T-cell (primary cell): ENCODE measurements at regions of chr13 and their contacts with region 1.

Region 1: GRCh38 chr13:30442926-30443325 is 20.6 kb downstream of the UBE2L5 start:
- DNase-seq: no peak
- ATAC-seq: no peak
- H3K4me3 ChIP-seq: no peak overlapping the region
- H3K4me3 Mint-ChIP-seq: no peak overlapping the region
- H3K27ac ChIP-seq: no peak overlapping the region
- H3K27ac Mint-ChIP-seq: no peak overlapping the region
- H3K4me1 ChIP-seq: peaks cover 0 to 7% of the 10 kb centered on the region in 2 experiments
- H3K4me1 Mint-ChIP-seq: peaks cover 5 to 24% (median 13%) of the 10 kb centered on the region in 3 donors
- H3K27me3 ChIP-seq: peaks cover 0 to 15% of the 10 kb centered on the region in 2 experiments
- H3K27me3 Mint-ChIP-seq: peaks cover 0 to 5% of the 10 kb centered on the region in 2 donors

Region 2: GRCh38 chr13:30750036-30750435 is 307.1 kb after region 1 on chr13:
- CTCF ChIA-PET with region 1: interaction called in 1 of 2 experiments, 14 read pairs
- POLR2A ChIA-PET with region 1: no interaction called
- DNase-seq: no peak
- ATAC-seq: no peak
- H3K4me3 ChIP-seq: no peak overlapping the region
- H3K4me3 Mint-ChIP-seq: no peak overlapping the region
- H3K27ac ChIP-seq: no peak overlapping the region
- H3K27ac Mint-ChIP-seq: no peak overlapping the region
- H3K4me1 ChIP-seq: peaks cover 4 to 15% of the 10 kb centered on the region in 2 experiments
- H3K4me1 Mint-ChIP-seq: peaks cover 32 to 49% (median 32%) of the 10 kb centered on the region in 3 donors
- H3K27me3 ChIP-seq: no peaks in the 10 kb centered on the region
- H3K27me3 Mint-ChIP-seq: no peaks in the 10 kb centered on the region